H1 (cell line): ENCODE measurements at regions of chr5 and their contacts with region 1.

Region 1: DNA sequence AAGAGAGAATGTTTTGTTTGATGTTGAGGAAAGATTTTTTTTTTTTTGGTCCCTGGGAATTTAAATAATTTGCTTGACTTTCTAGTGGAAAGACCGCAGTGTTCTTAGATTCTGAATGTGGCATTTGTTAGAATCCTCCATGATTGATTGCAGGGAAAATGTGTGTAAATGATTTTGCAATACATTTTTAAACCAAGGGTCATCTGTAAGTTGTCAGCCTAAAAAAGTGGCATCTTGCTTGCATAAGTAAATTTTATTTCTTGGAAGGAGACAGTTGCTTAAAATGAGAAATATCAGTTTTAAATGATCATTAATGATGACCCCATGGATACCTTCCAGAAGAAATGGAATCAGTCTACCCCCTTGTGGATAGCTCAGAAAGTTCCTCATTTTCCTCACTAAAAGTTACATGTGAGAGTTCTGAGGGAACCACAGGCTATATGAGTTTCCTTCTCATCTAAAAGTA is 105.1 kb upstream of the SLC25A48 start:
- DNase-seq: no peak
- H3K4me3 ChIP-seq: no peak overlapping the region
- H3K27ac ChIP-seq: no peak overlapping the region
- H3K4me1 ChIP-seq: no peaks in the 10 kb centered on the region; a peak in 1 of 7 replicates
- H3K27me3 ChIP-seq: no peaks in the 10 kb centered on the region
- CTCF ChIP-seq: peak in 2 of 3 experiments; percentile 24 to 49; a peak in 2 of 4 replicates
- EP300 ChIP-seq: no peak
- POLR2A ChIP-seq: no peak
- RAD21 ChIP-seq: peak; percentile 69 to 75

Region 2: DNA sequence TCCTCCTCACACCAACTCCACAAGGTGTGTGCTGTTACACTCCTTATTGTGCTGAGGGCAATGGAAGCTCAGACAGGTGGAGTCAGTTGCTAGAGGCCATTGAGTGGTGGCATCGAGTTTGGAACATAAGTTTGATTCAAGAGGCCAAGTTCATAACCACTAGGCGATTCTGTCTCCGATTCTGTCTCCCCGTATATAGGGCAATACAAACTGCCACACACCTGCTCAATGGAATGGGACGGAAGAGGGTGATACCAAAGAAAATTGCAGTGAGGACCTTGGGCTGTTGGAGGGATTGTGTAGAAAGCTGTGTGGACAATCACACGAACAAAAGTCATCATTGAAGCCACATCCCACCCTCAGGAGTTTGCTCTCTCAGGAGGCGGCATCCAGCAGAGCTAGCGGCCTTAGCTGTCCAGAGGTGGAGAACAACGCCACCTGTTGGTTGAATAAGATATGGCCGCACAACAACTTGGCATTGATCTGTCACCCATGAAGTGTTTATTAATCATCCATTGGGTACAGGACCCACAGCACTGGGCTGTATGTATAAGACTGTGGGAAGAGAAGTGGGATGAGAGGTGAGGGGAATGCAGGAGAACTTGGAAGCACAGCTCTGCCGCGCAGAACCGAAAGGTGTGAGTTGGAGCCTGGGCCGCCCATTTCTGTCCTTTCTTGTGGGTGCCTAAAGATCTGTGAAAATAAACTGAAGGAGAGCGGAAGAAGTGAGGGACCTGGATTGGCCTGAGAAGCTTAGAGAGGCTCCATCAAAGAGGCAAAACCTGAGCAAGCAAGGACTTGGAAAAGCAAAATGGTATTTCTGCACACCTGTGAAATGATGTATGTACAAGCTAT is 177.5 kb before region 1 on chr5:
- CTCF ChIA-PET with region 1: interaction called, 72 read pairs
- POLR2A ChIA-PET with region 1: no interaction called
- DNase-seq: peak in 1 of 2 experiments; percentile 82
- H3K4me3 ChIP-seq: no peak overlapping the region
- H3K27ac ChIP-seq: no peak overlapping the region
- H3K4me1 ChIP-seq: no peaks in the 10 kb centered on the region; a peak in 2 of 7 replicates
- H3K27me3 ChIP-seq: peaks cover 41 to 50% (median 49%) of the 10 kb centered on the region in 4 experiments
- CTCF ChIP-seq: peak; percentile 64 to 87 (median 85)
- EP300 ChIP-seq: no peak
- POLR2A ChIP-seq: no peak
- RAD21 ChIP-seq: peak; percentile 89 to 91

Region 3: GRCh38 chr5:135565725-135566421 is 163.5 kb before region 1 on chr5:
- CTCF ChIA-PET with region 1: interaction called, 218 read pairs
- POLR2A ChIA-PET with region 1: interaction called, 4 read pairs
- DNase-seq: peak in 1 of 2 experiments; percentile 95
- H3K4me3 ChIP-seq: peak overlapping the region in 1 of 4 experiments; percentile 12; a peak in 1 of 8 replicates
- H3K27ac ChIP-seq: no peak overlapping the region
- H3K4me1 ChIP-seq: peaks cover 0 to 23% (median 9%) of the 10 kb centered on the region in 4 experiments; a peak in 6 of 7 replicates
- H3K27me3 ChIP-seq: no peaks in the 10 kb centered on the region
- CTCF ChIP-seq: peak; percentile 85 to 92 (median 88)
- EP300 ChIP-seq: no peak
- POLR2A ChIP-seq: no peak
- RAD21 ChIP-seq: peak; percentile 49 to 66

Region 4: DNA sequence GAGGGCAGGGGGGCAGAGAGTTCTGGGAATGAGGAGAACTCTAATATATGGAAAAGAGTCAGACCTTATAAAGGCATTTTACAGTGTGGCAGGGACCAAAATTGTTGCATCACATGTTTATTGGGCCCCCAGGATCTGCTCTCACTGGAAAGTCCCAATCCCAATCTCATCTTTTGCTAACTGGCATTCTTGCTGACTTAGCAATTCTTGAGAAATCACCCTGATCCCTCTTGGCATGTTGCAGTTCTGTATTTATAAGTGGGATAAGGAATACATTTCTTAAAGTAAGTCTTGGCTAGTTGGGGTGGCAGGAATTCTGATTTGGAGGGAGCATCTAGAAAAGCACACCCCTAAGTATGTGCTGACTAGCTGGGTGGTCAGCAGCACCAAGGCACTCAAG is 46.1 kb before region 1 on chr5:
- CTCF ChIA-PET with region 1: no interaction called
- POLR2A ChIA-PET with region 1: no interaction called
- DNase-seq: no peak
- H3K4me3 ChIP-seq: no peak overlapping the region
- H3K27ac ChIP-seq: no peak overlapping the region
- H3K4me1 ChIP-seq: no peaks in the 10 kb centered on the region; a peak in 1 of 7 replicates
- H3K27me3 ChIP-seq: no peaks in the 10 kb centered on the region
- CTCF ChIP-seq: no peak
- EP300 ChIP-seq: no peak
- POLR2A ChIP-seq: no peak
- RAD21 ChIP-seq: no peak

Region 5: DNA sequence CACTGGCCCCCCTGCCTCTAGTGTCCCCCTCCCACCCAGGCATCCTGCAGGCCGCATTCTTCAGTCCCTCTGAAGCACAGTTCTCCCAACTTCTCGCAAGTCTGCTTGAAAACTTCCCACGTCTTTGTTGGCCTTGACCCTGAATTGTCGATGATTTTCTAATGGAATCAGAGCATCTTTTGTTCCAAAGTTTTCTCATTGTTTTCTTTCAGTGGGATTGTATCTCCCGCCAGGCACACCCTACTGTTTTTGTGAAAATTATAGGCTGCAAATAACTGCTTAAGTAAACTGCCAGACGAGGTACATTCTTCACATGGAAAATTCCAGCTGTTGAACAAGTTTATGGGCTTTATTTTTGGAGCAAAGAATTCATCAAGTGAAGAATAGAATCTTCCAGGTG is 17.4 kb before region 1 on chr5:
- CTCF ChIA-PET with region 1: interaction called, 12 read pairs
- POLR2A ChIA-PET with region 1: interaction called, 3 read pairs
- DNase-seq: no peak
- H3K4me3 ChIP-seq: no peak overlapping the region
- H3K27ac ChIP-seq: no peak overlapping the region
- H3K4me1 ChIP-seq: peaks cover 0 to 3% (median 0%) of the 10 kb centered on the region in 4 experiments; a peak in 1 of 7 replicates
- H3K27me3 ChIP-seq: no peaks in the 10 kb centered on the region
- CTCF ChIP-seq: no peak
- EP300 ChIP-seq: no peak
- POLR2A ChIP-seq: no peak
- RAD21 ChIP-seq: no peak

Region 6: GRCh38 chr5:135750506-135750905 is 21.2 kb after region 1 on chr5:
- CTCF ChIA-PET with region 1: interaction called, 10 read pairs
- POLR2A ChIA-PET with region 1: no interaction called
- DNase-seq: no peak
- H3K4me3 ChIP-seq: no peak overlapping the region
- H3K27ac ChIP-seq: no peak overlapping the region
- H3K4me1 ChIP-seq: no peaks in the 10 kb centered on the region
- H3K27me3 ChIP-seq: no peaks in the 10 kb centered on the region
- CTCF ChIP-seq: peak; percentile 59 to 71 (median 64)
- EP300 ChIP-seq: no peak
- POLR2A ChIP-seq: no peak
- RAD21 ChIP-seq: peak; percentile 18 to 40; a peak in 2 of 4 replicates

Region 7: DNA sequence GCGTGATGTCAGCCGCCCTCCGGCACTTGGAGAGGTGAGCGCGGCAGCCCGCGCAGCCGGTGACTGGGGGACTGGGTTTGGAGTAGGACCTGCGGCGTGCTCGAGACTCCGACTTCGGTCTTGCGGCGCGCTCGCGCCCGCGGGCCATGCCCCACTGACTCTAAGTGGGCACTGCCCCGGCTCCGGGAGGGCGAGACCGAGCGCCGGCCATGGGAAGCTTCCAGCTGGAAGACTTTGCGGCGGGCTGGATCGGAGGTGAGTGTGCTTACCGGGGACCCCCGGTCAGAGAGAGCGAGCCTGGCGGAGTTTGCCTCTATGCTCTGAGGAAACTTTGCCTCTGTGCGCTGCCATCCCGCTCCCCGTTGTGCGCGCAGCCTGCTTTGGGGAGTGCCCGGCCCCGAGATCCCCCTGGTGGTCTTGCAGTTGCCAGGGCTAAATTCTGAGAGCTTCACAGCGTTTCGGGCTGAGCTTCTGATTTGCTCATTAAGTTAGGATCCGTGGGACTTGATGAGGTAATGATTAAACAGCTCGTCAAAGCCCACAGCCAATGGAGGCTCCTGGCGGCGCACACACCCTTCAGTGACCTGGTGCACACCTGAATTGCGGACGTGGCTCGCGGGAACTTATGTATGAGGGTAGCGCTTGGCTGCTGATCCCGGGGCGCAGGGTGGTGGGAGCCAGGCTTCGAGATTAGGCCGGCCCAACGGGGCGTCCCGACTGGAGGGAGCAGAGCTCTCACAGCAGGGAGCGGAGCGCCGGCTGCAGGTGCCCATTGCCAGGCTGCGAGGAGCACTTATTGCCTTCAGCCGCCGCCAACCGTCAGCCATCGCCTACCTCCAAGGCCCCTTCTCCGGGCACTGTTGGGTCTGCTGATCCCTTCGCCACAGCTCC is 105.5 kb after region 1 on chr5 and contains the start of gene SLC25A48:
- CTCF ChIA-PET with region 1: interaction called, 23 read pairs
- POLR2A ChIA-PET with region 1: no interaction called
- DNase-seq: peak; percentile 75 to 88
- H3K4me3 ChIP-seq: peak within 1 kb of the TSS; percentile 46 to 84 (median 72)
- H3K27ac ChIP-seq: no peak within 1 kb of the TSS
- H3K4me1 ChIP-seq: peaks cover 0 to 5% (median 1%) of the 10 kb centered on the region in 4 experiments; a peak in 2 of 7 replicates
- H3K27me3 ChIP-seq: peaks cover 8 to 44% (median 32%) of the 10 kb centered on the region in 4 experiments
- CTCF ChIP-seq: peak in 2 of 3 experiments; percentile 10 to 76; a peak in 2 of 4 replicates
- EP300 ChIP-seq: no peak
- POLR2A ChIP-seq: no peak
- RAD21 ChIP-seq: peak; percentile 23 to 43; a peak in 2 of 4 replicates
- total RNA-seq, gene SLC25A48: 1.8 TPM in 2 replicates

Region 8: GRCh38 chr5:136080483-136081216 is 351.3 kb after region 1 on chr5:
- CTCF ChIA-PET with region 1: no interaction called
- POLR2A ChIA-PET with region 1: no interaction called
- DNase-seq: peak; percentile 47 to 72
- H3K4me3 ChIP-seq: peak overlapping the region; percentile 57 to 67 (median 62)
- H3K27ac ChIP-seq: no peak overlapping the region
- H3K4me1 ChIP-seq: no peaks in the 10 kb centered on the region
- H3K27me3 ChIP-seq: peaks cover 0 to 4% (median 0%) of the 10 kb centered on the region in 4 experiments; a peak in 3 of 7 replicates
- CTCF ChIP-seq: no peak
- EP300 ChIP-seq: no peak
- POLR2A ChIP-seq: peak; percentile 61 to 66; a peak in 2 of 3 replicates
- RAD21 ChIP-seq: no peak

Region 9: DNA sequence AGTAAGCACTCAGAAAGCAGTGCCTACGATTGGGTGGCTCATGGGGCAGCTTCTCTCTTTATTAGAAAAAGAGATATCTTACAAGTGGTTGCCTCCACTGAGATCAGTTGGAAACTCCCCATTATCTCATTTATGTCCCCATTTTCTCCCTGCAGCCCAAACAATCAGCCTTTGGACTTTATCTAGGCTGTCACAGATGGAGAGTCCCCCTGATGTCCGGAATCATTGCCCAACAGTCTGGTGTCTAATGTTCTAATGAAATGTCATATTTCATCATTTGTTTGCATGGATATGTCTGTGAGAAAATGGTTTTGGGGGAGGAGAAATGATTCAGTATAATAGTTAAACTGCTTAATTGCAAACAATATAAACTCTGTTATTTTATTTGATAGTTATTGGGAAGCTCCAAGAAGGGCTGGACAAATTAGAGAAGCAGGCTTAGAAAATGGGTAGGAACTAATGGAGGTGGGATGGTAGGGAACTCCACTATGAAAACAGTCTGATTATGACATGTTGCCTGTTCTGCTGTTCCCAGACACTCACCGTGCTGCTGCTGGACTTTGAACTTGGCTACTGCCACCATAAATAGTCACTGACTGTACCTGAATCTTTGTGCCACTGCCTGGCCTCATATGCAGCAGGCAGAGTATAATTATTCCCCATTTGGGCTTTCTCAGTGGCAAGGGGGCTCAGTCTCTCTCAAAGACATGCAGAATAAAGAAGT is 365.0 kb after region 1 on chr5:
- CTCF ChIA-PET with region 1: no interaction called
- POLR2A ChIA-PET with region 1: no interaction called
- DNase-seq: no peak
- H3K4me3 ChIP-seq: no peak overlapping the region
- H3K27ac ChIP-seq: no peak overlapping the region
- H3K4me1 ChIP-seq: peaks cover 3 to 6% (median 4%) of the 10 kb centered on the region in 4 experiments; a peak in 4 of 7 replicates
- H3K27me3 ChIP-seq: no peaks in the 10 kb centered on the region
- CTCF ChIP-seq: no peak
- EP300 ChIP-seq: no peak
- POLR2A ChIP-seq: no peak
- RAD21 ChIP-seq: no peak